Left cardiac atrium (tissue), 4 donors: ENCODE measurements at regions of chr6 and their contacts with region 1.

Region 1: DNA sequence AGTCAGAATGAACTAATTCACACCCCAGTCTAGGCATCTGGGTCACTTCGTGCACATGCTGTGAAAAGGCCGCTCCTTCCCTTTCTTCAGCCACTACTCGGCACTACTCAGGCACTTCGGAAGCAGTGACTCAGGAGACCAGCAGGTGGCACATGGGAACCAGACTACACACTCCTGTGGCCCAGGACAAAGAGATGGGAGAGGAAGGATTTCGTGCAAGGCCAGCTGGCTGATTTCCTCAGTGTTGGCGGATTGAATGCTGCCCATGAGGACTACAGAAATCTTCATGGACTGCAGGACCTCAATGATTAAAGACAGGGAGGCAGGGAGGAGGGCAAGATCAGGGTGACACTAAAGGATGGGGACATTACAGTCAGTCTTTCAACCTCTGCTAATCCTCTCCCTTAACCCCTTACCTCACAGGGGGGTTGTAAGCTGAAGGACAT is 117.8 kb upstream of the SPACA1 start:
- DNase-seq: peak; percentile 84
- ATAC-seq: peak; percentile 97 to 99

Region 2: GRCh38 chr6:87553159-87553765 is 376.6 kb before region 1 on chr6:
- intact Hi-C with region 1: no loop called
- DNase-seq: no peak
- ATAC-seq: no peak

Region 3: DNA sequence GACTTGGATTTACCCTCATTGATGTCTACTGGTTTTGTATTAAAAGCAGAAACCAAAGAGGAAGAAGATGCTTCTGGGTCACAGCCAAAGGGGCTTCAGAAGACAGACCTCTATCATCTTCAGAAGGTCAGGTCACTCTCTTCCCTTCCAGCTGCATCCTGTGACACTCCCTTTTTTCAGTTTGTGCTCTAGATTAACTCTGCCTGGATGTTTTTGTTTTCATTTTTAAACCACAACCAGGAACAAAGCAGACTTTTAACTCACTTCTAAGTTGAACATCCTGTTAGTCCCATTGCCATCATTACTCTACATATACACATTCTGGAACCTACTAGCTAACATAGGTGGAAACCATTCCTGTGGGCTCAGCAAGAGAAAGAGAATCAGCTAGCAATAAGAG is 273.0 kb before region 1 on chr6:
- intact Hi-C with region 1: no loop called
- DNase-seq: no peak
- ATAC-seq: no peak

Region 4: GRCh38 chr6:88780714-88781389 is 851.0 kb after region 1 on chr6:
- intact Hi-C with region 1: loop called in 1 of 2 experiments (anchors 2 kb)
- DNase-seq: peak; percentile 26
- ATAC-seq: peak; percentile 63 to 65

Region 5: DNA sequence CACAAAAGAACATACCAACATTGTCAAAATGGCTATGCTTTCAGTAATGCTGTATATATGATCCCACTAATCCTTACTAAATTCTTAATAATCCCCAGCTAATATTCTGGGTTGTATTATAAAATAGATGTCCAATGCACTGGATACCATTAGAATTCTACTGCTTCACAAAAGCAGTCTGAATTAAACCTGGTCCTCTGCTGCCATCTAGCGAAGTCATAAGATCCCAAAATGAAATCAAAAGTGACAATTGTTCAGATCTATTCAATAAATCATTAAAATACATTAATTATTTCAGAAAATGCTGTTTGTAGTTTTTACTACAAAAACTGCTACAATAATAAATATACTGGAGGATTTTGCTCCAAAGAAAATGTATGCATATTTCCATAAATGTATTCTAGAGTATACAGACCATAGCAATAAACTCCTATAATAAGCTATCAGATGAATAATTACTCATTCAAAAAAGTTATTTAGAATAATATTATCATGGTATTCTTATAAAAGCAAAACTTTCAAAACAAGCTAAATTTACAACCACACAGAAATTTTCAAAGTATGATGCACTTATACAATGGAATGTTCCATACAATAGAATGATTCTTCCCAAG is 941.0 kb after region 1 on chr6:
- intact Hi-C with region 1: loop called (anchors 5 to 10 kb)
- DNase-seq: peak; percentile 22
- ATAC-seq: peak in 1 of 2 donors; percentile 27